Dorsolateral prefrontal cortex (tissue), 120 donors: ENCODE measurements at regions of chr7 and their contacts with region 1.

Region 1: DNA sequence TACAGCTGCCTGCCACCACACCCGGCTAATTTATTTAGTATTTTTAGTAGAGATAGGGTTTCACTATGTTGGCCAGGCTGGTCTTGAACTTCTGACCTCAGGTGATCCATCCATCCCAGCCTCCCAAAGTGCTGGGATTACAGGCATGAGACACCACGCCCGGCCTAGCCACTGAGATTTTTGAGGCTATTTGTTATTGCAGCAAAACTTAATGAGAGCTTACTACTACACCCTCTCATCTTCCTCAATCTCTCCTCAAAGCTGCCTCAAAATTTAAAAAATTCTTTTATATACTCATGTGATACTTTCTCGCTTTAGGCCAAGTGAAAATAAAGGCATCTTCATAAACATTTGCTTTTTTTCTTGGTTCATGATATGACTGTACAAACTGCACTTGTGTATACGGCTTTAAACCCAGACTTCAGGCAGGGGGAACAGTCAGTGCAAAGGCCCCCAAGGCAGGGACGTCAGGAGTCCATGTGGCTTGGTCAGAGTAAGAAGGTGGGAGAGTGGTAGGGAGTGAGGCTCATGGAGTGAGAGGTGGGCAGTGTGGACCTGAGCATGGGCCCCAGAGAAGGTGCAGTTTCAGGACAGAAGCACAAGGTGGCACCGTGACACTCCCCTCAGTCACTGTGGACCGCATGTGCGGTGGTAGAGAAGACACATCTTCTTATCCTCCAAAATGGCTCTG is 55.5 kb downstream of the SYPL1 start:
- DNase-seq: peak; percentile 58 to 83 (median 76)
- H3K4me3 ChIP-seq: no peak overlapping the region
- H3K27ac ChIP-seq: peak overlapping the region in 18 of 59 donors; percentile 81 to 96 (median 92)
- H3K27me3 ChIP-seq: no peaks in the 10 kb centered on the region
- CTCF ChIP-seq: peak; percentile 35 to 97 (median 91)

Region 2: DNA sequence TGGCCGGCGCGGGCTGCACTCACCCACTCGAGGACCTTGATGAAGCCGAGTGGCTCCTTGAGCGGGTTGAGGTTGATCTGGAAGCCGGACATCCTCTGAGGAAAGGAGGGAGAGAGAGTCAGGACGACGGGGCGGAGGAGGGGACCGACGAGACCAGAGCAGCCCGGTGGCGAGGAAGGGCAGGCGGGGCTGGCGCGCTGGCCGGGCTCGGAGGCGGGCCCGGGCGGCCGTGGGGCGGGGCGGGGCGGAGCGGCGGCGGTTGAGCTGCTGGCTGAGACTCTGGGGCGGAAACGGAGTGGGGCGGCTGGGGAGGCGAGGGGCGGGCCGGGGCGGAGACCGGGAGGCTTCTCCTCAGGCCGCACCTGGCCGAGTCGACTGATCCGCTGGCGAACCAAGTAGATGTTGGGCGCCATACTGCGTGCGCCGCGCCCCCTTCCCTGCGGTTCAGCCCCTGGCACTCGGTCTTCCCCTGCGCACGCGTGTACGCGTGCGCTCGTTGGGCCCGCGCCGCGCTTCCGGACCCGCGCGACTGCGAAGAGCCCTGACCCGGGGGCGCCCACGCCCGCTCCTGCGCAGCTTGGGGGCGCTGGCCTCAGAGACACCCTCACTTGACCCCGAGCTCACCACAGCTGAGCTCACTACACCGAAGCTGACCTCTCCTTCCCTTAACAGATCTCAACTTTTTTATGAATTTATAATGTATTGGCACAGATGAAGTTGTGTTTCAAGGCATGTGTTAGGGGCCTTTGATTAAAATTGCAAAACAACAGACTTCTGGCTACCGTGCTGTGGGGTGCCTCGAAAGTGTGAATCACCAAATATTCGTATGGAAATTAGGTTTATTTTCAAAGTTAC is 55.7 kb after region 1 on chr7 and contains the start of gene SYPL1:
- intact Hi-C with region 1: loop called (anchors 1 to 2 kb)
- DNase-seq: peak; percentile 66 to 92 (median 82)
- H3K4me3 ChIP-seq: peak within 1 kb of the TSS; percentile 59 to 93 (median 80)
- H3K27ac ChIP-seq: peak within 1 kb of the TSS; percentile 65 to 99 (median 95)
- H3K27me3 ChIP-seq: no peaks in the 10 kb centered on the region
- CTCF ChIP-seq: peak in 47 of 56 donors; percentile 7 to 65 (median 37)
- total RNA-seq, gene SYPL1: 21.3 to 84.1 (median 36.2) TPM

Region 3: GRCh38 chr7:106153891-106154449 is 97.3 kb after region 1 on chr7:
- intact Hi-C with region 1: loop called (anchors 1 kb)
- DNase-seq: peak; percentile 82 to 93 (median 91)
- H3K4me3 ChIP-seq: peak overlapping the region in 19 of 59 donors; percentile 6 to 52 (median 27)
- H3K27ac ChIP-seq: peak overlapping the region in 4 of 59 donors; percentile 11 to 73 (median 22)
- H3K27me3 ChIP-seq: no peaks in the 10 kb centered on the region
- CTCF ChIP-seq: peak; percentile 78 to 99 (median 95)

Region 4: DNA sequence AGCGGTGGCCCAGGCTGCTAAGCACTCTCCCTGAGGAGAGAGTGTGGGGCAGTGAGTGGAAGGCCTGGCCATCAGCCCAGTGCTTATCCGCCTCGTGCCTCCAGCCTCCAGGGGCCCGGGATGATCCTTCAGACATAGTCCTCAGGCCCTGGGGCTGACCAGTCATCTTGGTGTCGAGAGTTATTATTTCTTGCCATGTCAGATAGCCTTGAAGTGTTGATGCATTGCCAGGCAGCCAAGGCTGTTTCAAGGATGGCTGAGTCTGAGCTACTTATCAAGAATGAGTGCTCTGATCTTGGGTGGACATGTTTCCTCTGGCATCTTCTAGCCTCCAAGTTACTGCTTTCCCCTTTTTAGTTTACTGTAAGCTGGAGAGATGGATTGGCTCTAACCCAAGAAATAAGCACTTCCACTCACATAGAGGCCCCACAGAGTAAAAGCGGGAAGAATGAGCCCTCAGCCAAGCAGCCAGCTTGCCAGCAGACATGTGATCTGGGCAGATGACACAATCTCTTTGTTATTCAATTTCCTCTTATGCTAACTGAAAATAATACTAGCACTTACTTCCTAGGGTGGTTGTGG is 364.6 kb after region 1 on chr7:
- intact Hi-C with region 1: loop called in 1 of 2 experiments (anchors 5 kb)
- DNase-seq: peak in 5 of 10 donors; percentile 25 to 60 (median 52)
- H3K4me3 ChIP-seq: peak overlapping the region in 2 of 59 donors; percentile 14 to 22
- H3K27ac ChIP-seq: peak overlapping the region in 43 of 59 donors; percentile 4 to 80 (median 55)
- H3K27me3 ChIP-seq: no peaks in the 10 kb centered on the region
- CTCF ChIP-seq: no peak